Ovary (tissue), 10 donors: ENCODE measurements at regions of chr17 and their contacts with region 1.

Region 1: GRCh38 chr17:53462393-53462811 is 360.3 kb upstream of the KIF2B start:
- DNase-seq: no peak
- H3K4me3 ChIP-seq: no peak overlapping the region
- H3K27ac ChIP-seq: no peak overlapping the region
- H3K4me1 ChIP-seq: no peaks in the 10 kb centered on the region
- H3K27me3 ChIP-seq: no peaks in the 10 kb centered on the region
- CTCF ChIP-seq: no peak
- EP300 ChIP-seq: no peak
- POLR2A ChIP-seq: no peak

Region 2: DNA sequence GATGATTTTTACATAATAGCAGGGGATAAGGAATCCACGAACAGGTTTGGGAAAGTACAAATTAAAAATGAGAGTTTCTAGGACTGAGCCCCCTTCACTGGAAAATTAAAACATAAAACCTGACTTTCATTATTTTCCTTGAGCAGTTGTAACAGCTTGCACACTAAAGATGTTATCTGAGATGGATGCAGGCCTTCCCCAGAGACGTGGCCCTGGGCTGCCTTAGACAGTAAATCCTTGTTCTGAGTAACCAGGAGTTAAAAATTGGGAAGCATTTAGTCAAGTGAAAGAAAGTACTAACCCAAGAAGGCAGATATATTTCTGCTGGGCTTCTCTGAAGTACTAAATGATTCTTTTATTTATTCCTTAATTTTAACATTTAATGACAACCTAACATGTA is 71.8 kb before region 1 on chr17:
- intact Hi-C with region 1: no loop called
- DNase-seq: no peak
- H3K4me3 ChIP-seq: no peak overlapping the region
- H3K27ac ChIP-seq: no peak overlapping the region
- H3K4me1 ChIP-seq: no peaks in the 10 kb centered on the region
- H3K27me3 ChIP-seq: no peaks in the 10 kb centered on the region
- CTCF ChIP-seq: no peak
- EP300 ChIP-seq: no peak
- POLR2A ChIP-seq: no peak

Region 3: DNA sequence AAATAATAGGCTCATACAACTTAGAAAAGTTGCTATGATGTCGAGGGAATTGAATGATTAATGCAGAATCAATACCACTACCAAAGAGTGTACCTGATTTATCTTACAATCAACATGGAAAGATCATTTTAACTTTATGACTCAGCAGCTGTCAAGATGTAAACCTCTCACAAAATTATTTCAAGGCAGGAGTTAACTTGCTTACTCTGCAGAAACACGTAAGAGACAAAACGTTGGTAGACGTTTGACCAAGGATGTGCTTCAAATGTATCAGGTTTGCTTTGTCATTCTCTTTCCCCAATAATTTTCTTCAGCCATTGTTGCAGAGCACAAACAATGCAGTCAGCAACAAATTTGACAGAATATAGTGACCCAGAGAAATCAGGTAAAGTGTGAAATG is 55.5 kb before region 1 on chr17:
- intact Hi-C with region 1: loop called in 1 of 4 experiments (anchors 10 kb)
- DNase-seq: no peak
- H3K4me3 ChIP-seq: no peak overlapping the region
- H3K27ac ChIP-seq: no peak overlapping the region
- H3K4me1 ChIP-seq: no peaks in the 10 kb centered on the region
- H3K27me3 ChIP-seq: no peaks in the 10 kb centered on the region
- CTCF ChIP-seq: no peak
- EP300 ChIP-seq: no peak
- POLR2A ChIP-seq: no peak

Region 4: GRCh38 chr17:53516636-53517035 is 54.2 kb after region 1 on chr17:
- intact Hi-C with region 1: no loop called
- DNase-seq: no peak
- H3K4me3 ChIP-seq: no peak overlapping the region
- H3K27ac ChIP-seq: no peak overlapping the region
- H3K4me1 ChIP-seq: no peaks in the 10 kb centered on the region
- H3K27me3 ChIP-seq: no peaks in the 10 kb centered on the region
- CTCF ChIP-seq: no peak
- EP300 ChIP-seq: no peak
- POLR2A ChIP-seq: no peak

Region 5: GRCh38 chr17:53619025-53619424 is 156.6 kb after region 1 on chr17:
- intact Hi-C with region 1: no loop called
- DNase-seq: no peak
- H3K4me3 ChIP-seq: no peak overlapping the region
- H3K27ac ChIP-seq: no peak overlapping the region
- H3K4me1 ChIP-seq: no peaks in the 10 kb centered on the region
- H3K27me3 ChIP-seq: no peaks in the 10 kb centered on the region
- CTCF ChIP-seq: no peak
- EP300 ChIP-seq: no peak
- POLR2A ChIP-seq: no peak